ENCODE measurements at regions of chr6 and their contacts with region 1.

Region 1: DNA sequence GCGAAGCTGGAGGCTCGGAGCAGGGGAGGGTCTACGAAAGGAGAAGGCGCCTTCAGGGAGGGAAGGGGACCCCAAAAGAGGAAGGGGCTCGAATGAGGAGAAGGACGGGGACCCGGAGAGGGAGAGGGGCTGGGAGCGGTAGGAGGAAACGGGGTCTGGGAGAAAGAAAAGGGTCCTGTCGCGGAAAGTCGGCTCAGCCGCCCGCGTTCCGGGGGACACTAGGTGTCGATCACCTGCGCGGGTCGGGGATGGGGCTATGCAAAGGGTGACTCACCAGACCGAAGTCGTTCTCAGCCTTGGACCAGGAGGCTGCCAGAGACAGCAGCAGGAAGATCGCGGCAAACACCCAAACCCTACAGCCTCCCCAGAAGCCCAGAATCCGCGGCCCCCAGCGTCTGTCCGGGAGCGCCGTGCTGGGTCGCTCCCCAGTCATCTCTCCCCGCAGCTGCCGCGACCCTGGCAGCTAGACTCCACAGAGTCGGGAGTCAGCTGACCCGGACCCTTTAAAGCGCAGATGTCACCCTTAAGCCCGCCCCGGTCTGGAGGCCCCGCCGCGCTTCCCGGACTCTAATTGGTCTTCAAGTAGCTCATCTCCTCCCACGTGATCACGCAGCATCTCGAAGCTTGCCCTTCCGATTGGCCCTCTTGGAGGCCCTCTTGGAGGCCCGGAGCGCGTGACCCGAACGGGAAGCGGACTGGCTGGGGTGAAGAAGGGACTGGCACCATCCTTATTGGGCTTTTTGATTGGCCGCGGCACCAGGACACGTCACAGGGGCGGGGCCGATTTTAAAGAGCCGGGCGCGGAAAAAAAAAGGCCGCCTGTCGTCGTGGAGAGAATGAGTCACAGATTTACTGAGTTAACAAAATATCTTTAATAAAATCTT is at the start of gene NEU1:
- H3K4me3 ChIP-seq: peak within 1 kb of the TSS; percentile 82
- H3K27ac ChIP-seq: peak within 1 kb of the TSS; percentile 27
- H3K4me1 ChIP-seq: no peaks in the 10 kb centered on the region
- CTCF ChIP-seq: no peak

Region 2: GRCh38 chr6:31541658-31542521 is 320.7 kb before region 1 on chr6 and contains the start of gene DDX39B:
- CTCF ChIA-PET with region 1: no interaction called
- POLR2A ChIA-PET with region 1: interaction called, 12 read pairs
- H3K4me3 ChIP-seq: peak within 1 kb of the TSS; percentile 64
- H3K27ac ChIP-seq: peak within 1 kb of the TSS; percentile 100
- H3K4me1 ChIP-seq: peaks cover 14% of the 10 kb centered on the region
- CTCF ChIP-seq: no peak

Region 3: GRCh38 chr6:31729515-31729978 is 133.0 kb before region 1 on chr6:
- CTCF ChIA-PET with region 1: interaction called, 9 read pairs
- POLR2A ChIA-PET with region 1: interaction called, 11 read pairs
- H3K4me3 ChIP-seq: peak overlapping the region; percentile 74
- H3K27ac ChIP-seq: peak overlapping the region; percentile 67; the same call in 1 of the 2 replicates
- H3K4me1 ChIP-seq: peaks cover 3% of the 10 kb centered on the region
- CTCF ChIP-seq: peak; percentile 94

Region 4: DNA sequence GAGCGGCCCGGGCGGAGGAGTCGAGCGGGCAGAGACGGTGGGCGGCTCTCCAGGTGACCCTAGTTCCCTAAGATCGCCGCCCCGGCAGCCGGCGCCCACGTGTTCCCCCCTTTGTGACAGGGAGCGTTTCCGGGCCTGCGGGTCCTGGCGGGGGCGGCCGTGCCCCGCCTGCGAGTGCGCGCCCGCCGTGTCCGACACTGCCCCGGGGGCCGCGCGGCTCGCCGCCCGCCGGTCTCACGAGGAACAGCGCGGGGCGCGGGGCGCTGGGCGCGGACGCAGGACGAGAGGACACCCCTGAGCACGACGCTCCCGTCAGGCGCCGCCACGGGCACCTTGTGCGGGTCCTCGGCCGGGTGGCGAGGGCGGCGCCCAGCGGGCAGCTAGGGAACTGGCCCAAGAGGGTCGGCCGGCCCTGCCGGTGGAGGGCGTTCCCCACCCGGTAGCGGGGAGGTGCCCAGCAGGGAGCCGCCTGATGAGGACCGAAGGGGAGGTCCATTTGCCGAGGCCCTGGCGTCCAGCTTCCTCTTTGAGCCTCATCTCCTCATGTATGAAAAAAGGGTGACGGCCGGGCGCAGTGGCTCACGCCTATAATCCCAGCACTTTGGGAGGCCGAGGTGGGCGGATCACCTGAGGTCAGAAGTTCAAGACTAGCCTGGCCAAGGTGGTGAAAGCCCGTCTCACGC is 66.8 kb before region 1 on chr6 and contains the start of gene VARS1:
- CTCF ChIA-PET with region 1: interaction called, 3 read pairs
- POLR2A ChIA-PET with region 1: interaction called, 12 read pairs
- H3K4me3 ChIP-seq: peak within 1 kb of the TSS; percentile 81
- H3K27ac ChIP-seq: peak within 1 kb of the TSS; percentile 93
- H3K4me1 ChIP-seq: no peaks in the 10 kb centered on the region; the same call in 1 of the 2 replicates
- CTCF ChIP-seq: peak; percentile 100

Region 5: DNA sequence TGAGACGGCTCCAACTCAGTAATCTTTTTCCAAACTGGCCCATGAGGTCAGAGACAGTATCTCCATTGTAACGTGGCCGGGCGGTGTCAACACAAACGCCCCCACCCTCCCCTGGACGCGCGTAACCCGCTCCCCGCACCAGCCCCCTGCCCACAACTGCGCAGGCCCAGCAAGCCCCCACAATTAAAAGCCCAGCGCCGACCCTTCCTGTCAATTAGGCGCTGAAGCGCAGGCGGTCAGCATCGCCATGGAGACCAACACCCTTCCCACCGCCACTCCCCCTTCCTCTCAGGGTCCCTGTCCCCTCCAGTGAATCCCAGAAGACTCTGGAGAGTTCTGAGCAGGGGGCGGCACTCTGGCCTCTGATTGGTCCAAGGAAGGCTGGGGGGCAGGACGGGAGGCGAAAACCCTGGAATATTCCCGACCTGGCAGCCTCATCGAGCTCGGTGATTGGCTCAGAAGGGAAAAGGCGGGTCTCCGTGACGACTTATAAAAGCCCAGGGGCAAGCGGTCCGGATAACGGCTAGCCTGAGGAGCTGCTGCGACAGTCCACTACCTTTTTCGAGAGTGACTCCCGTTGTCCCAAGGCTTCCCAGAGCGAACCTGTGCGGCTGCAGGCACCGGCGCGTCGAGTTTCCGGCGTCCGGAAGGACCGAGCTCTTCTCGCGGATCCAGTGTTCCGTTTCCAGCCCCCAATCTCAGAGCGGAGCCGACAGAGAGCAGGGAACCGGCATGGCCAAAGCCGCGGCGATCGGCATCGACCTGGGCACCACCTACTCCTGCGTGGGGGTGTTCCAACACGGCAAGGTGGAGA is 47.4 kb before region 1 on chr6 and contains the starts of genes HSPA1A and HSPA1L:
- CTCF ChIA-PET with region 1: no interaction called
- POLR2A ChIA-PET with region 1: interaction called, 27 read pairs
- H3K4me3 ChIP-seq: peak within 1 kb of the TSS; percentile 46
- H3K27ac ChIP-seq: peak within 1 kb of the TSS; percentile 80
- H3K4me1 ChIP-seq: peaks cover 4% of the 10 kb centered on the region; the same call in 1 of the 2 replicates
- CTCF ChIP-seq: no peak

Region 6: GRCh38 chr6:31851485-31851832 is 11.1 kb before region 1 on chr6:
- CTCF ChIA-PET with region 1: no interaction called
- POLR2A ChIA-PET with region 1: interaction called, 11 read pairs
- H3K4me3 ChIP-seq: no peak overlapping the region
- H3K27ac ChIP-seq: no peak overlapping the region
- H3K4me1 ChIP-seq: no peaks in the 10 kb centered on the region
- CTCF ChIP-seq: no peak

Region 7: GRCh38 chr6:31901953-31902643 is 39.5 kb after region 1 on chr6 and contains the start of gene ZBTB12:
- CTCF ChIA-PET with region 1: interaction called, 4 read pairs
- POLR2A ChIA-PET with region 1: interaction called, 30 read pairs
- H3K4me3 ChIP-seq: peak within 1 kb of the TSS; percentile 62
- H3K27ac ChIP-seq: peak within 1 kb of the TSS; percentile 9
- H3K4me1 ChIP-seq: peaks cover 9% of the 10 kb centered on the region
- CTCF ChIP-seq: peak; percentile 57; the same call in 1 of the 2 replicates